GM23248 (cell line): ENCODE measurements at regions of chrX and their contacts with region 1.

Region 1: GRCh38 chrX:38458071-38458470 is 103.3 kb upstream of the TSPAN7 start:
- DNase-seq: no peak
- H3K4me3 ChIP-seq: no peak overlapping the region
- H3K27ac ChIP-seq: no peak overlapping the region
- H3K4me1 ChIP-seq: no peaks in the 10 kb centered on the region
- H3K27me3 ChIP-seq: no peaks in the 10 kb centered on the region

Region 2: GRCh38 chrX:38214551-38215531 is 243.2 kb before region 1 on chrX:
- in situ Hi-C with region 1: no loop called
- DNase-seq: peak; percentile 87
- H3K4me3 ChIP-seq: peak overlapping the region; percentile 55
- H3K27ac ChIP-seq: peak overlapping the region; percentile 98
- H3K4me1 ChIP-seq: peaks cover 33% of the 10 kb centered on the region
- H3K27me3 ChIP-seq: no peaks in the 10 kb centered on the region

Region 3: GRCh38 chrX:38336538-38337240 is 121.4 kb before region 1 on chrX:
- in situ Hi-C with region 1: no loop called
- DNase-seq: no peak
- H3K4me3 ChIP-seq: no peak overlapping the region
- H3K27ac ChIP-seq: no peak overlapping the region
- H3K4me1 ChIP-seq: no peaks in the 10 kb centered on the region
- H3K27me3 ChIP-seq: no peaks in the 10 kb centered on the region

Region 4: DNA sequence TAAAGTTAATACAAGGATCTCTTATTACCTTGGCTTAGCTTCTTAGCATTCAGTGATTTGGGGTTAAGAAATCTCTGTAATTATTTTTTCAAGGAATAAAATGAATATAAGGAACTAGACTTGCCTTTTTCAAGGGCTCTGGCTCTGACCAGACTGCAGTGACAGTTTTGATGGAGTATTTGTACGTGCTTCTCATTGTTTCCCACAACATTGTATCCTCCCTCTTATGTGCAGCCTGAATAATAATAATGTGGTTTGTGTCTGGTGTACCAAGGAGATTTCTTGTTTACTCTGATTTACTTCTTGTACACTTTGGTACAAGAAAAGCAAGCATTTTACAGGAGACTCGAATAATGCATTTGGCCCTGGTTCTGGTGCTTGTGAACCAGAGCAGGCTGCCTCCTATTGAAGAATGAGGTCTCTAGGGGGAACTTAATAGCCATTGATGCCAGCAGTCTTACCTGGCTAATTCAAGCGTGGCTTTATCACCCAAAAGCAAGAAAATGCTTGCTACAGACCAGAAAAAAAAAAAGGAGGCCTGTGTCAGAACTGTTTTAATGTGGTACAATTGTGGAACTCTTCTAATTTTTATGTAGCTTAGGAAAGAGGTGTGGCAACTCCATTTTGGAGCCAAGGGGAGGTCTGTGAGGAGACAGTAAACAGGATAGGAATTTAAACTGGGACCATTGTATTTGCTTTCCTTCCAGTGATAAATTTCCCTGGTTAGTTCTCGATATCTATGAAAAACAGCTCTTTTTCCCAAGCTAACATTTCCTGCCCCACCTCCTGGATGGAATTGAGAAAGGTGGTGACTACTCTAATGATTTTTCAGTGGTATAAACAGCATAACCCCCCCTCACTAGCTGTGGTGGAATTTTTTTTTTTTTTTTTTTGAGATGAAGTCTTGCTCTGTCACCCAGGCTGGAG is 100.1 kb before region 1 on chrX:
- in situ Hi-C with region 1: loop called (anchors 25 kb)
- DNase-seq: no peak
- H3K4me3 ChIP-seq: no peak overlapping the region
- H3K27ac ChIP-seq: no peak overlapping the region
- H3K4me1 ChIP-seq: no peaks in the 10 kb centered on the region
- H3K27me3 ChIP-seq: no peaks in the 10 kb centered on the region